Right ventricle myocardium inferior (tissue), 1 donor: ENCODE measurements at regions of chr3 and their contacts with region 1.

Region 1: DNA sequence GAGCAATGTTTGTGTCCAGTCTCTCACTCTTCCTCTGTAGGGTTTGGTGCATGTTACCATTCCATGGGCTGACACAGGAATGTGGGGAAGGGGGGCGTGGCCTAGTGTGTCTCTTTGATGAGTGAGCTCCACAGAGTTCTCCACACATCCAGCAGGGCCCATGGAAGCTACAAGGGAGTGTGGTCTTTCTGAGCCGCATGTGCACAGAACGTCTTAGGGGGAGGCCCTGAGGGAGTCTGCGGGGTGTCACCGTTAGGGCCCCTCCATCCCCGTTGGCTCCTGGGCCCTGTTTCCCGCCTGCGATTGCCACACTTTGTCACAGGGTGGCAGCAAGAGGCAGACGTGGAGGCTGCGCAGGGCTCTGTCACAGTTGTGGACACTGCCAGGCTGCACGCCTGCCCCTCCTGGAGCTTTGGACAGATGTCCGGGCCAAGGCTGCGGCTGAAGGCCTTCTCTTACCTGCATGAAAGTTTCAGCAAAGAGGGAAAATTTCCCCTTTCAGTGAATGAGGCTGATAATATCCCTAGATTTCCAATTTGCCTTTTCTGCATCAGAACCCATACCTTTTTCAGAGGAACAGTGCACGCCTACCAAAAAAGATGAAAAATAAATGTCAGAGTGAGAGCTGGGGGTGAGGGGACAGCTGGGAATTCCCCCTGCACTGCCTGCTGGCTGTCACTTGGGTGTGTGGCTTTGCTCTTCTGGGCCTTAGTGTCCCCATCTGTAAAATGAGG is 24.3 kb downstream of the CACNA2D3 start:
- DNase-seq: peak; percentile 78
- ATAC-seq: peak; percentile 88

Region 2: GRCh38 chr3:54356261-54357045 is 209.8 kb after region 1 on chr3:
- intact Hi-C with region 1: loop called (anchors 5 kb)
- DNase-seq: no peak
- ATAC-seq: peak; percentile 73

Region 3: GRCh38 chr3:54374214-54374855 is 227.7 kb after region 1 on chr3:
- intact Hi-C with region 1: loop called (anchors 2 kb)
- DNase-seq: no peak
- ATAC-seq: no peak

Region 4: DNA sequence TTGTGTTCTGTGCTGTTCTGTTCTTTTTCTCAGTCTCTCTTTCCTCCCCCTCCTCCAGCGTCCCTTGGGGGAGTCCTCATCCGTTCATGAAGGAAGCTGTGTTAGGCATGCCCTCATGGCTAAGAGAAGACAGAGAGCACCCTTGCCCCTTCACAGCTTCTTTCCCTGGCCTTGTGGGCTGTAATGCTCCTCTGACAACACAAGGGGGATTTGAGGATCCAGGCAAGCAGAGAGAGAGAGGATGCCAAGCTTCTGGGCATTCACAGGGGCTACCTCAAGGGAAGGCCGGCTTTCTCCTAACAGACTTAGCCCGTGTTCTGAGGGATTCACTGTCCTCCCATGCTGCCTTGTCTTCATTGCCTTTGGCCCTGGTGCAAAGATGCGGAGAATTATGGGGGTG is 391.7 kb after region 1 on chr3:
- intact Hi-C with region 1: no loop called
- DNase-seq: no peak
- ATAC-seq: peak; percentile 20